PC-9 (cell line): ENCODE measurements at regions of chr1 and their contacts with region 1.

Region 1: DNA sequence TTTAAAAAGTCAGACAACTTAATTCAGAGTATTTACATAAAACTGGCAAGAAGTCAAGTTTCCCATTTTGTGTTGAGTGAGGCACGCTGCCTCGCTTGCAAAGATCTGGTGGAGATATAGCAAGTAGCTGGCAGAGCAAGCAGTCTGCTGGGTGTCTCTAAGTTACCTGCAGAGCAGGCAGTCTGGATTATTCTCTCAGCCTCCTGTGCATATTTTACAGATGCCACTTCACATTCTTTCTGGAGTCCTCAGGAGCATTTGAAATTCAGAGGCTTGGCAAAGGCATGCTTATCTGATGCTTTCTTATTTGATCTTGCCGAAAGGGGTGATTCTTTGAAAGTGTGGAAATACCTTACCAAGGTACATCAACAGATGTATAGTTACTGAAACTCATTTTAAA is 640.4 kb upstream of the ADGRL4 start:
- DNase-seq: no peak
- H3K4me3 ChIP-seq: no peak overlapping the region
- H3K27ac ChIP-seq: no peak overlapping the region
- H3K4me1 ChIP-seq: no peaks in the 10 kb centered on the region
- H3K27me3 ChIP-seq: no peaks in the 10 kb centered on the region
- CTCF ChIP-seq: no peak

Region 2: GRCh38 chr1:79760531-79760930 is 113.6 kb after region 1 on chr1:
- CTCF ChIA-PET with region 1: no interaction called
- POLR2A ChIA-PET with region 1: interaction called, 10 read pairs
- intact Hi-C with region 1: no loop called
- DNase-seq: no peak
- H3K4me3 ChIP-seq: no peak overlapping the region
- H3K27ac ChIP-seq: no peak overlapping the region
- H3K4me1 ChIP-seq: no peaks in the 10 kb centered on the region
- H3K27me3 ChIP-seq: no peaks in the 10 kb centered on the region
- CTCF ChIP-seq: no peak